ENCODE measurements at regions of chr1 and their contacts with region 1.

Region 1: DNA sequence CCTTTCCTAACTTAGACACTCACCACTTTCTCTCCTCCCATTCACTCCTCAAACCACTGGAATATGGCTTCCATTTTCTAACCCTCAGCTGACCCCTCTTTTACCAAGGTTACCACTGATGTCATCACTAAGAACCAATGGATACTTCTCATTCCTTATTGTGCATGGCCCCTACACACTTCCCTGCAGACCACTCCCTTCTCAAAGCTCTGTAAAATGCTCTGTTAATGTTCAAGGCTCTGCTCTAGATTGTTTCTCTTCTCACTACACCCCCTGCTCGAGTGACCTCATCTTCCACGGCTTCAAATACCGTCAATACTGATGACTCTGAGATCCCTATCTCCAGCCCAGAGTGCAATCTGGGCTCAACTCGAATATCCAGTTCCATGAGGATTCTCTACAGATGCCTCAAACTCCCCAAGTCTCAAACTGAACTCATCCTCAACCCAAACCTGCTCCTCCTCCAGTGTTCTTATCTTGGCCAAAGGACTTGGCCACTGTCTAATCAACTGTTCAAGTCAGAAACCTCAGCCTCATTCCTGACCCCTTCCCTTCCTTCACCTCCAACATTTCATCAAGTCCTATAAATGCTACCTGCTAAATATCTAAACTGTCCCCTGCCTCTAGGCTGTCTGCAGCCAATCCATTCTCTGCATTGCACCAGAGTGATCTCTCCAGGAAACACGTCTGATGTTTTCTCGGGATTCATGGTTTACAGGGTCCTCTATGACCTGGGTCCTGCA is 41.3 kb upstream of the BMP8B start:
- DNase-seq: no peak
- ATAC-seq: no peak
- H3K4me3 ChIP-seq: no peak overlapping the region
- H3K27ac ChIP-seq: no peak overlapping the region
- H3K4me1 ChIP-seq: no peaks in the 10 kb centered on the region
- H3K27me3 ChIP-seq: no peaks in the 10 kb centered on the region
- CTCF ChIP-seq: no peak

Region 2: DNA sequence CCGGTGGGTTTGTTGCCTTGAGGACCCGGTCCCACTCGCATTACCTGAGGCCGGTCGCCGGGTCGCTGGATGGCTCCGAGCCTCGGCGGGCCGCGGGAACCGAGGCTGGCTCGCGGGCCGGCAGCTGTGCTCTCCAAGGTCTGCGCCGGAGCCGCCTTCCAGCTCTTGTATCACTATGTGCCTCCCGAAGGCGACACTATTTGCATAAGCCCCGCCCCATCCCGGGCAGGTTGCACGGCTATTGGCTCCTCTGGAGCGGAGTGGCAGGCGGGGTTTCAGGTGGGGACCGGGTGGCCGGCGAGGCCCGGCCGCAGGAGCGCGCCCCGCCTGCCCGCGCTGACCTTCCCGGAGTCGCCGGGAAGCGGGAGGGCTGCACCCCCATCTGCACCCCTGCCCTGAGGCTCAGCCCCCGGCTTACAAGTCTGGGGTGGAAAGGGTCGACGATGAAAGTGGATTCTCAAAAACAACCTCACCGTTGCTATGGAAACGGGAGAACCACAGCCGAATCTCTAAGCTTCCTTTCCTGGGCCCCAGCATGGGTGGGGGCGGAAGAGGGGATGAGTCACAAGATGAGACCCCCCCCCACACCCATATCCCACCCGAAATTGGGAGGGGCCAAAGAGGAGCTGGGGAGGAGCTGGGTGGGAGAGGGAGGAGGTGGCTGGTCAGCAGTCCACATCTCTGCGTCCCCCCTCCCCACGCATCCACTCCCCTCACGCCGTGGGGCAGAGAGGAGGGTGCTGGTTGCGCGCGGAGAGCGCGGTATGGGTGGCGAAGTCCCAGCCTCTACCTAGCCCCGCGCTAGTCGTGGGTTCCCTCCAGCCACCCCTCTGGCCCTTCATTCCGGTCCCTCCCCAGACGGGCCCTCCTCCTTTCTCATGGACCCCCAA is 138.5 kb before region 1 on chr1 and contains the start of gene HPCAL4:
- intact Hi-C with region 1: no loop called
- DNase-seq: peak; percentile 93
- ATAC-seq: peak; percentile 96 to 98
- H3K4me3 ChIP-seq: peak within 1 kb of the TSS; percentile 54
- H3K27ac ChIP-seq: no peak within 1 kb of the TSS
- H3K4me1 ChIP-seq: peaks cover 22% of the 10 kb centered on the region
- H3K27me3 ChIP-seq: peaks cover 35% of the 10 kb centered on the region
- CTCF ChIP-seq: no peak
- total RNA-seq, gene HPCAL4: 0.41 TPM

Region 3: DNA sequence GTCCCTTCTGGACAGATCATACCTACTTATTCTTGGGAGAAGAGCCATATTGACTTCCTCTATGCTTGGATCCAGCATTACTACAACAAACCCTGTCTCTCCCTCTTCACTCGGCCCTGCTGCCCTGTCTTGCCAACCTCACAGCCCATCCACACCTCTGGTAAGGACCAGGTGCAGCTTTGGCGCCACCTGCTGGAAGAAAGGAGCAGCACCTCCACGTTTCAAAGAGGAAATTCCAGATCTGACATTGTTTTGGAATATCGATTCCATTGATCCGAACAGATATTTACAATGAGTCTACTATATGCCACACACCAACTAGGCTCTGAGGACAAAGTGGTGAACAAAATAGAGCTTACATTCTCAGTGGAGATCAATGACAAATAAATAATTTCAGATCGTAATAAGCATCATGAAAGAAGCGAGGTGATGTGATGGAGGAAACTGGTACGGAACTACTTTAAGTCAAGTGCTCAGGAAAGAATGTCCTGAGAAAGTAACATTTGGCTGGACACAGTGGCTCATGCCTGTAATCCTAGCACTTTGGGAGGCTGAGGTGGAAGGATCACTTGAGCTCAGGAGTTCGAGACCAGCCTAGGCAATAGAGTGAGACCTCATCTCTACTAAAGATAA is 143.7 kb after region 1 on chr1:
- intact Hi-C with region 1: loop called (anchors 10 kb)
- DNase-seq: peak; percentile 85
- ATAC-seq: peak; percentile 73 to 80
- H3K4me3 ChIP-seq: no peak overlapping the region
- H3K27ac ChIP-seq: no peak overlapping the region
- H3K4me1 ChIP-seq: peaks cover 22% of the 10 kb centered on the region
- H3K27me3 ChIP-seq: no peaks in the 10 kb centered on the region
- CTCF ChIP-seq: peak; percentile 96

Measured in lower lobe of right lung (tissue), 2 donors.